ENCODE measurements at regions of chr11 and their contacts with region 1.

Region 1: GRCh38 chr11:66386171-66387069 is 14.9 kb upstream of the SLC29A2 start:
- DNase-seq: peak; percentile 71
- H3K4me3 ChIP-seq: peak overlapping the region; percentile 20 to 31 (median 21)
- H3K27ac ChIP-seq: no peak overlapping the region
- H3K4me1 ChIP-seq: no peaks in the 10 kb centered on the region
- H3K27me3 ChIP-seq: no peaks in the 10 kb centered on the region
- CTCF ChIP-seq: peak; percentile 91 to 95

Region 2: GRCh38 chr11:66317723-66318599 is 68.5 kb before region 1 on chr11:
- CTCF ChIA-PET with region 1: interaction called, 41 read pairs
- dilution Hi-C with region 1: no loop called
- in situ Hi-C with region 1: loop called in 1 of 2 experiments (anchors 5 kb)
- intact Hi-C with region 1: no loop called
- DNase-seq: peak; percentile 48
- H3K4me3 ChIP-seq: no peak overlapping the region
- H3K27ac ChIP-seq: no peak overlapping the region
- H3K4me1 ChIP-seq: peaks cover 16% of the 10 kb centered on the region
- H3K27me3 ChIP-seq: no peaks in the 10 kb centered on the region
- CTCF ChIP-seq: no peak

Region 3: GRCh38 chr11:66328307-66329144 is 57.9 kb before region 1 on chr11:
- CTCF ChIA-PET with region 1: interaction called, 12 read pairs
- dilution Hi-C with region 1: no loop called
- in situ Hi-C with region 1: no loop called
- intact Hi-C with region 1: loop called (anchors 1 kb)
- DNase-seq: peak; percentile 45
- H3K4me3 ChIP-seq: no peak overlapping the region
- H3K27ac ChIP-seq: no peak overlapping the region
- H3K4me1 ChIP-seq: peaks cover 26% of the 10 kb centered on the region
- H3K27me3 ChIP-seq: no peaks in the 10 kb centered on the region
- CTCF ChIP-seq: peak; percentile 89 to 96

Region 4: DNA sequence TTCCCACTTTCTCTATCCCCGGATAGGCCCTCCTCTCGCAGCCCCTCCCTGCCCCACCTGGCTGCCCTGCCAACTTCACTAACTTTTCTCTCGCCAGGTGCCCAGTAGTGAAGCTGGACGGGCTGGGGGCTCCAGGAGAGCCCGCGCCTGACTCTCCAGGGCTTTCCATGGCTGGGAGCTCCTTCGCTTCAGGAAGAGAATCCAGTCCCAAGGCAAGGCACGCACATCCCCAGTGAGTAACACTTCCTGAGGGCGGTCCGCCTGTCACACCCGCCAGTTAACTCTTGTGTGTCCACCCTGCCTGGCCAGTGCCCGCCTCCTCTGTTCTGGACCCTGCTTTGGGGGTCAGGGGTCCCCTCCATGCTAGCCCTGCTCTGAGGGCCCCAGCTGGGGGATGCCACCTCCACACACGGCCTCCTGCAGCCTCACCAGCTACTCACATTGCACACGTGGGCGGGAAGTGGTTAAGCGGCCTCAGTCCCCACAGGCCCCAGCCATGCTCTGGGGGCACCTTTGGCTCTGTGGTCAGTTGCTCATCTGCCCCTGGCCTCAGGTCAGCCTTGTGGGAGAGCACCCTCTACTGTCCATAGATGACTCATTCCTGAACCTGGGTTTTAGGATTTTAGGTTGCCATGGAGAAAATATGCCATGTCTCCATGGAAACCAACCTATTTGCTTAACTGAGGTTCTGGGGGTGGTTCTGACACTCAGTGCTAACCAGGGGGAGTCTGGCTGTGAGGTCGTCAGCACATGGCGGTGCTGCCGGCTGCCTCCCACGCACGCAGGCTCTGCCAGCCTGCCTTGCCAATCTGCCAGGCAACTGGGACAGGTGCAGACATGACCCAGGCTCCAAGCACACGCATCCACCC is 50.0 kb before region 1 on chr11 and contains the start of gene RIN1:
- CTCF ChIA-PET with region 1: no interaction called
- dilution Hi-C with region 1: loop called (anchors 5 kb)
- in situ Hi-C with region 1: no loop called
- intact Hi-C with region 1: loop called (anchors 2 kb)
- DNase-seq: peak; percentile 99
- H3K4me3 ChIP-seq: peak within 1 kb of the TSS; percentile 40 to 78 (median 70)
- H3K27ac ChIP-seq: peak within 1 kb of the TSS; percentile 87
- H3K4me1 ChIP-seq: peaks cover 52% of the 10 kb centered on the region
- H3K27me3 ChIP-seq: no peaks in the 10 kb centered on the region
- CTCF ChIP-seq: peak in 1 of 2 donors; percentile 19
- total RNA-seq, gene RIN1: 28.5 to 75.6 TPM

Region 5: GRCh38 chr11:66347425-66348276 is 38.8 kb before region 1 on chr11 and contains the start of gene B4GAT1:
- CTCF ChIA-PET with region 1: interaction called, 4 read pairs
- dilution Hi-C with region 1: no loop called
- in situ Hi-C with region 1: no loop called
- intact Hi-C with region 1: loop called (anchors 1 kb)
- DNase-seq: peak; percentile 88
- H3K4me3 ChIP-seq: peak within 1 kb of the TSS; percentile 67 to 95 (median 91)
- H3K27ac ChIP-seq: peak within 1 kb of the TSS; percentile 30
- H3K4me1 ChIP-seq: peaks cover 42% of the 10 kb centered on the region
- H3K27me3 ChIP-seq: no peaks in the 10 kb centered on the region
- CTCF ChIP-seq: no peak
- total RNA-seq, gene B4GAT1: 10.1 to 15.5 TPM

Region 6: DNA sequence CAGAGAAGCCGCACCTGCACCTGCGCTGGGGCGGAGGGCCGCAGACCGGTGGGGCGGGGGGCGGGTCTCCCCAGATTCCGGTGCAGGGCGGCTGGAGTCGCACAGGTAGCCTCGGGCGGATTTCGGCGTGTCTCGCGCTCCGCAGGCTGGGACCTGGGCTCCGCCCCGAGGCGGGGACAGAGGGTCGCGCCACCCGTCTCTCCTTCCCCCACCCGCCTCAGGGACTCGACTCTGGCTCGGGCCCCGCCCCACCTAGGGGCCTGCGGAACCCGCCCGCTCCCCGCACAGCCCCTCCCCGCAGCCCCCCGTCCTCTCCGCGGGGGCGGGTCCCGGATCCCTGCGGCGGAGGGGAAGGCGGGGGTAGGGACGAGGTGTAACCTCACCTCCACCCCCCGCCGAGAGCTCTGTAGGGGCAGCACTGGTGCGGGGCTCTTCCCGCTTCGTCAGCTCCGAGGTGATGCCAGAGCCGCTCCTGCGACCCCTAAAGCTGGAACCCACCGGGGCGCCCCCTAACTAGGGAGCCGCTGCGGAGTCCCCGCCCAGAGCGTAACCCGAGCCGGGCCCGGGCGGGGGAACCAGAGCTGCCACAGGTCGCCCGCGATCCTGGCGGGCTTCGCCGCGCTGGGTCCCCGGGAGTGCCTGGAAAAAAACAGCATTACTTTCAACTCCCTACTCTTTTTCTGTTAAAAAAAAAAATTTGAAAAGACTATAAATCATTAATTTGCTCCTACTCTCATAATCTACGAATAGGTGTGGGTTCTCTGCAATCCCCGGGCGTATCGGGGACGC is 14.6 kb before region 1 on chr11 and contains the start of gene SLC29A2:
- CTCF ChIA-PET with region 1: interaction called, 10 read pairs
- dilution Hi-C with region 1: no loop called
- in situ Hi-C with region 1: no loop called
- intact Hi-C with region 1: no loop called
- DNase-seq: peak; percentile 73
- H3K4me3 ChIP-seq: peak within 1 kb of the TSS; percentile 59 to 75 (median 70)
- H3K27ac ChIP-seq: no peak within 1 kb of the TSS
- H3K4me1 ChIP-seq: peaks cover 10% of the 10 kb centered on the region
- H3K27me3 ChIP-seq: no peaks in the 10 kb centered on the region
- CTCF ChIP-seq: no peak
- total RNA-seq, gene SLC29A2: 3.2 to 5.9 TPM

Region 7: DNA sequence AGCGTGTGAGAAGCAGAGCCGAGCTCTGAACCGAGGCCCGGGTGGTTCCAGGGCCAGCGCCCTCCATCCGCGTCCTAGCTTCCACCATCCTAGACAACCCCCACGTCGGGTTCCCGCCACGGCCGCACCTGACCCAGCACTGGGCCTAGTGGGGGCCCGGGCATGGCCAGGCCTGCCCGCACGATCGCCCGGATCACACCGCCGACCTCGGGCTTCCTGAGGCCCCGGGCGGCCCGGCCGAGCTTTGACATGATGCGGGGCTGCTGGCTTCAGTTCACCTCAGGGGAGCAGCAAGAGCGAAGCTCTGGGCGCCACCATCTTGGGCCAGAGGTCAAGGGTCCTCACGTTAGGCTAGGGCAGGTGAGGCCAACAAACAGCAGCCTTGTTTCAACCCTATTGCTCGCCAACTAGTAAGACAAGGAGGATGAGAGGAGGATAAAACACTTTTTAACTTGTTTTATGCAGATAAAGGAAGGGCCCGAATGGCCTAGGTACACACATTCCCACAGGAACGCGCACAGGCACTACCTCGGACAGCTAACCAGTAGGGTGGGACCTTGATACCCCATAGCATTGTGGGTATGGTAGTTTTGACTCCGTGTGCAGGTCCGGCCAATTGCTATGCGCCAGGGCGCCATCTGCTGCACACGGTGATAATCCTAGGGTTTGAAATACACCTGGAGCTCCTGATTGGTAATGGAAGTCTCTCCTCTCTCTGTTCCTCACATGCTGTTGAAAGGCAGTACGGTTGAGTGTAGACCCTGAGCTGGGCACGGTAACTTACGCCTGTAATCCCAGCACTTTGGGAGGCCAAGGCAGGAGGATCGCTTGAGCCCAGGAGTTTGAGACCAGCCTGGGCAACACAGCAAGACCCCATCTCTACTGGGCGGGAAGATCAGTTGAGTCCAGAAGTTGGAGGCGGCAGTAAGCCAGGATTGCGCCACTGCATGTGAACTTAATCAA is 52.4 kb after region 1 on chr11 and contains the start of gene MRPL11:
- CTCF ChIA-PET with region 1: no interaction called
- dilution Hi-C with region 1: no loop called
- in situ Hi-C with region 1: no loop called
- intact Hi-C with region 1: no loop called
- DNase-seq: peak; percentile 90
- H3K4me3 ChIP-seq: peak within 1 kb of the TSS; percentile 53 to 87 (median 80)
- H3K27ac ChIP-seq: peak within 1 kb of the TSS; percentile 64
- H3K4me1 ChIP-seq: peaks cover 7% of the 10 kb centered on the region
- H3K27me3 ChIP-seq: no peaks in the 10 kb centered on the region
- CTCF ChIP-seq: peak; percentile 60 to 74
- total RNA-seq, gene MRPL11: 19.8 to 47.6 TPM

Measured in mammary epithelial cell (primary cell).